CD8-positive, alpha-beta memory T cell (primary cell): ENCODE measurements at regions of chr3 and their contacts with region 1.

Region 1: GRCh38 chr3:49539659-49540560 is 14.4 kb upstream of the BSN start:
- DNase-seq: peak; percentile 83 to 92 (median 89)
- H3K4me3 ChIP-seq: peak overlapping the region; percentile 80
- H3K4me3 Mint-ChIP-seq: peak overlapping the region; percentile 77 to 93 (median 83)
- H3K27ac ChIP-seq: peak overlapping the region; percentile 59
- H3K27ac Mint-ChIP-seq: peak overlapping the region in 7 of 8 donors; percentile 17 to 74 (median 64)
- H3K4me1 ChIP-seq: peaks cover 7% of the 10 kb centered on the region
- H3K4me1 Mint-ChIP-seq: peaks cover 0 to 11% (median 6%) of the 10 kb centered on the region in 3 donors
- H3K27me3 ChIP-seq: no peaks in the 10 kb centered on the region
- H3K27me3 Mint-ChIP-seq: peaks cover 1 to 14% of the 10 kb centered on the region in 2 donors

Region 2: DNA sequence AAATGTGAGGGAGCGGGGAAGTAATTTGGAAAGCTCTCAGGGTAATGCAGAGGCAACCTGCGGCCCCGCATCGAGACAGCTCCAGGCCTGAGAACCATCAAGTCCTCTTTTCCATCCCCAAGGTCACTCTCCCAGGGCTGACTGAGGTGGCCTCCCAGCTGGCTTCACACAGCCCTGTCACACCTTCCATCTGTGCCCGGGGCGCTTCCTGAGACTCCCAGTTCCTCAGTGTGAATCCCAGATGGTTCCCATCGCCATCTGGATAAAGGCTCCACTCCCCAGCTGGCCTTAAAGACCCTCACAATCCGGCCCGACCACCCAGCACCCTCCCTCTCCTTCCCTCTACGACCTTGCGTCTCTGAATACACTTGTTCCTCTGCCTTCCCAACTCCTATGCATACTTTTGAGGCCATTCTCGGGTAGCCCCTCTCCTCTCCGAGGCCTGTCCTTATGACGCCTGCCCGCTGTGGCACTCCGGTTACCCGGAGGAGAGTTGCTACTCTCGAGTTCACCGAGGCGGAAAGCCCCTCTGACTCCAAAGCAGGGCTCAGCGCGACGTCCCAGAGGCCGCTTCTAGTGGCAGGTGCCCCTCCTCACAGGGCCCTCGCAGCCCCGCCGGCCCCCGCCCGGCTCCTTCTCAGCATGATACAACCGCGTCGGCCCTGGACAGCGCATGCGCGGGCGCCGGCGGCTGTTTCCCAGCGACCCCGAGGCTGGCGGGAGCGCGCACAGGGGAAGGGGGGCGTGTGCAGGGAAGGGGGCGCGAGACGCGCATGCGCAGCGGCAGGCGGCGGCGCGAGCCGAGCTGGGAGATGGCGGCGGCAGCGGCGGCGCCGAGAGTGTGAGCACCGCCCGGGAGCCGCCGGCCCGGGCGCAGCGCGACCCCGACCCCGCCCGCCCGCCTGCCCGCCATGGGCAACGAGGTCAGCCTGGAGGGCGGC is 14.1 kb after region 1 on chr3 and contains the start of gene BSN:
- CTCF ChIA-PET with region 1: interaction called, 54 read pairs
- POLR2A ChIA-PET with region 1: interaction called, 6 read pairs
- DNase-seq: peak; percentile 84 to 95 (median 90)
- H3K4me3 ChIP-seq: peak within 1 kb of the TSS; percentile 85
- H3K4me3 Mint-ChIP-seq: peak within 1 kb of the TSS; percentile 82 to 91 (median 87)
- H3K27ac ChIP-seq: peak within 1 kb of the TSS; percentile 16
- H3K27ac Mint-ChIP-seq: peak within 1 kb of the TSS in 6 of 8 donors; percentile 21 to 87 (median 56)
- H3K4me1 ChIP-seq: peaks cover 18% of the 10 kb centered on the region
- H3K4me1 Mint-ChIP-seq: peaks cover 16 to 32% (median 29%) of the 10 kb centered on the region in 3 donors
- H3K27me3 ChIP-seq: no peaks in the 10 kb centered on the region
- H3K27me3 Mint-ChIP-seq: peaks cover 4 to 33% of the 10 kb centered on the region in 2 donors
- total RNA-seq, gene BSN: 0.33 to 0.46 TPM

Region 3: DNA sequence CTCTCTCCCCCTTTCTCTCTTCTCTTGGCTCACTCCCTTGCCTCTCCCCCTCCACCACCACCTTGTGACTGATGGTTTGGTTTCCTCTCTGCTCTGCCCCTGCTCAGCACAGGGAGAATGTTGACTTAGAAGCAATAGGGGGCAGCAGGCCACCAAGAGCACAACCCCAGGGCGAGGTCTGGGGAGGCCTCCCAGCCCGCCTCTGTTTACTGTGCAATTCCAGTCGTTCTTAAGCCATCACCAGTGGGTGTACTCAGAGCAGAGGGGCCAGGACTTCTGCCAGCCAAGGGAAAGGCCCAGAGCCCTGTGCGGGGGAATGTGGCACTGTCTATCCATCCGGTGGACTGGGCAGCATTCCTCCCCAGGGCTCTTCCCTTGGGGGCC is 128.5 kb after region 1 on chr3:
- CTCF ChIA-PET with region 1: interaction called, 185 read pairs
- POLR2A ChIA-PET with region 1: interaction called, 28 read pairs
- DNase-seq: no peak
- H3K4me3 ChIP-seq: no peak overlapping the region
- H3K4me3 Mint-ChIP-seq: no peak overlapping the region
- H3K27ac ChIP-seq: no peak overlapping the region
- H3K27ac Mint-ChIP-seq: no peak overlapping the region
- H3K4me1 ChIP-seq: peaks cover 5% of the 10 kb centered on the region
- H3K4me1 Mint-ChIP-seq: peaks cover 8 to 13% (median 9%) of the 10 kb centered on the region in 3 donors
- H3K27me3 ChIP-seq: no peaks in the 10 kb centered on the region
- H3K27me3 Mint-ChIP-seq: peaks cover 0 to 3% of the 10 kb centered on the region in 2 donors

Region 4: GRCh38 chr3:49673715-49674496 is 134.0 kb after region 1 on chr3 and contains the start of gene APEH:
- CTCF ChIA-PET with region 1: interaction called, 185 read pairs
- POLR2A ChIA-PET with region 1: interaction called, 28 read pairs
- DNase-seq: peak; percentile 94 to 99 (median 96)
- H3K4me3 ChIP-seq: peak within 1 kb of the TSS; percentile 84
- H3K4me3 Mint-ChIP-seq: peak within 1 kb of the TSS; percentile 93 to 99 (median 94)
- H3K27ac ChIP-seq: peak within 1 kb of the TSS; percentile 80
- H3K27ac Mint-ChIP-seq: peak within 1 kb of the TSS; percentile 94 to 99 (median 96)
- H3K4me1 ChIP-seq: peaks cover 29% of the 10 kb centered on the region
- H3K4me1 Mint-ChIP-seq: peaks cover 30 to 50% (median 38%) of the 10 kb centered on the region in 3 donors
- H3K27me3 ChIP-seq: no peaks in the 10 kb centered on the region
- H3K27me3 Mint-ChIP-seq: no peaks in the 10 kb centered on the region
- total RNA-seq, gene APEH: 190 to 194 TPM

Region 5: GRCh38 chr3:49719214-49719884 is 179.4 kb after region 1 on chr3 and contains the start of gene AMIGO3:
- CTCF ChIA-PET with region 1: interaction called, 14 read pairs
- POLR2A ChIA-PET with region 1: interaction called, 4 read pairs
- DNase-seq: peak; percentile 86 to 93 (median 92)
- H3K4me3 ChIP-seq: peak within 1 kb of the TSS; percentile 76
- H3K4me3 Mint-ChIP-seq: peak within 1 kb of the TSS; percentile 91 to 96 (median 91)
- H3K27ac ChIP-seq: peak within 1 kb of the TSS; percentile 76
- H3K27ac Mint-ChIP-seq: peak within 1 kb of the TSS; percentile 86 to 97 (median 92)
- H3K4me1 ChIP-seq: peaks cover 15% of the 10 kb centered on the region
- H3K4me1 Mint-ChIP-seq: peaks cover 28 to 47% (median 36%) of the 10 kb centered on the region in 3 donors
- H3K27me3 ChIP-seq: no peaks in the 10 kb centered on the region
- H3K27me3 Mint-ChIP-seq: peaks cover 0 to 2% of the 10 kb centered on the region in 2 donors
- total RNA-seq, gene AMIGO3: 0.15 to 0.31 TPM